PC-3 (cell line): ENCODE measurements at regions of chr9 and their contacts with region 1.

Region 1: DNA sequence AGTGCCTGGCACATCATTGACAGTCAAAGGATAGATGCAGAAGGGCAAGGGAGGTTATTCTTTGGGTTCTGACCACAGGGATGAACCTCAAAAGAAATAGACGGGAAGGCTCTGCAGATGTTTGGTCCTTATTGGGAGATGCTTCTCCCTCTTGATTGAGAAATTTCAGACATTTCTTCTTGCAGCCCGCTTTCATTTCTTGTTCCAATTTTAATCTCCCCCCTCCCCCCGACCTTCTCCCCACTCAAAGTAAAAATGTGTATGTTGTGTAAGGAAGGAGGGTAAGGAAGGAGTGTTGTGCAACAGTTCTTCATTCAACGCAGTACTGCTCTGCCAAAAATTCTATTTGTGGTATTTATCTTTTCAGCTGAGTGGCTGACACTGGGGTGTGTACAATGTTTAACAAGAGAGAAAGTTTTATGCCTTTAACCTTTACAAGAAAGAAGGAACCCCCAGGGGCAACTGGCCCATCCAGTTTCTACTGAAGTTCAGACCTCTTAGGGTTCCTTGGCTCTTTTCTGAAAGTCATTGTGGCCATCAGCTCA is 46.3 kb upstream of the TNFSF15 start:
- DNase-seq: peak; percentile 78
- ATAC-seq: peak; percentile 61
- H3K4me3 ChIP-seq: no peak overlapping the region
- H3K27ac ChIP-seq: peak overlapping the region; percentile 65
- H3K4me1 ChIP-seq: peaks cover 35% of the 10 kb centered on the region
- H3K27me3 ChIP-seq: no peaks in the 10 kb centered on the region
- CTCF ChIP-seq: no peak

Region 2: DNA sequence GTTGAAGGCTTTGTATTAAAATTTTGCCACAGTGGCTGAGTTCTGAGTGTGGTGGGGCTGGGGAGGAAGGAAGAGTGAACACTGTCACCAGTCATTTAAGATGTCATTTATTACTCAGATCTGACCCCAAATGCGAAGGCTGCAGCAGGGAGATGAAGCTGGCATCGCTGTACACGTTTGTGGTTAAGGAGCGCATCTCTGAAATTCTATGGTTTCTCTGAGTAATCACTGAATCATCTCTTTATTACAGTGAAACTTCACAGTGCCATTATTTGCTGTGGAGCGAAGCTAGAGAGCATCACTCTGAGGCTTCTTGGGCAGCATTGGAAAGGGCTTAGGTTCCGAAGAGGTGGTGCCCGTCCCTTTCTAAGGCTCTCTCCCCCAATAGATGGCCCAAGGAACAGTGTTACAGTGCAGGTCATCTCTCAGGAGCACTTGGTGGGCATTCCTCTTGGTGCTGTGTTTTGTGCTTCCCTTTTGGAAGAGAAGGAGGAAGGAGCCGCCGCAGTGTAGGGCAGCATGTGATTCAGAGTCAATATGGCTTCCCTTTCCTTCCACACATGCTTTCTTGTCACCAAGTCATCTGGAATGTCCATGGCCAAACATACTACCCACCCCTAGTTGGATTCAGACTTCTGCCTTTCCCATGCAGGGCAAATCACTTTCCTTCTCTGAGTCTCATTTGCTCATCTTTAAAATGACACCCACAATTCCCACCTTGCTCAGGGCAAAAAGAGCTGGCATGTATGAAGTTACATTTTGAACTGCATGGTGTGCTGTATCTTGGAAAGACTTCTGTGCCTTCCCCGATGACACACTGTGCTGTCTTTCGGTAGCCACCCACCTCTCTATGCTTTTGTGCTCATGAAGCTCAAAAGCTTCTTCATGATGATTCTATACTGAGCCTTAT is 160.8 kb before region 1 on chr9:
- CTCF ChIA-PET with region 1: no interaction called
- POLR2A ChIA-PET with region 1: no interaction called
- intact Hi-C with region 1: loop called (anchors 2 kb)
- DNase-seq: peak; percentile 96
- ATAC-seq: peak; percentile 75
- H3K4me3 ChIP-seq: no peak overlapping the region
- H3K27ac ChIP-seq: peak overlapping the region; percentile 98
- H3K4me1 ChIP-seq: peaks cover 68% of the 10 kb centered on the region
- H3K27me3 ChIP-seq: no peaks in the 10 kb centered on the region
- CTCF ChIP-seq: no peak

Region 3: GRCh38 chr9:114745108-114745848 is 106.8 kb before region 1 on chr9:
- CTCF ChIA-PET with region 1: no interaction called
- POLR2A ChIA-PET with region 1: no interaction called
- intact Hi-C with region 1: loop called (anchors 5 kb)
- DNase-seq: peak; percentile 83
- ATAC-seq: peak; percentile 83
- H3K4me3 ChIP-seq: no peak overlapping the region
- H3K27ac ChIP-seq: peak overlapping the region; percentile 50
- H3K4me1 ChIP-seq: peaks cover 25% of the 10 kb centered on the region
- H3K27me3 ChIP-seq: no peaks in the 10 kb centered on the region
- CTCF ChIP-seq: no peak

Region 4: GRCh38 chr9:114805670-114806525 is 46.2 kb before region 1 on chr9 and contains the start of gene TNFSF15:
- CTCF ChIA-PET with region 1: no interaction called
- POLR2A ChIA-PET with region 1: no interaction called
- intact Hi-C with region 1: loop called (anchors 10 kb)
- DNase-seq: peak; percentile 43
- ATAC-seq: peak; percentile 64
- H3K4me3 ChIP-seq: peak within 1 kb of the TSS; percentile 47; the same call in 1 of the 2 replicates
- H3K27ac ChIP-seq: peak within 1 kb of the TSS; percentile 62
- H3K4me1 ChIP-seq: peaks cover 37% of the 10 kb centered on the region
- H3K27me3 ChIP-seq: no peaks in the 10 kb centered on the region
- CTCF ChIP-seq: no peak
- total RNA-seq, gene TNFSF15: 1.7 and 2.2 TPM in 2 replicates

Region 5: GRCh38 chr9:115008536-115009270 is 156.6 kb after region 1 on chr9:
- CTCF ChIA-PET with region 1: no interaction called
- POLR2A ChIA-PET with region 1: no interaction called
- intact Hi-C with region 1: no loop called
- DNase-seq: peak; percentile 78
- ATAC-seq: peak; percentile 89
- H3K4me3 ChIP-seq: no peak overlapping the region
- H3K27ac ChIP-seq: 0 out of 2 replicates have a peak overlapping the region, but pooled peaks have one; percentile 19
- H3K4me1 ChIP-seq: peaks cover 24% of the 10 kb centered on the region
- H3K27me3 ChIP-seq: no peaks in the 10 kb centered on the region
- CTCF ChIP-seq: no peak